K562 (cell line): ENCODE measurements at regions of chr1 and their contacts with region 1.

Region 1: DNA sequence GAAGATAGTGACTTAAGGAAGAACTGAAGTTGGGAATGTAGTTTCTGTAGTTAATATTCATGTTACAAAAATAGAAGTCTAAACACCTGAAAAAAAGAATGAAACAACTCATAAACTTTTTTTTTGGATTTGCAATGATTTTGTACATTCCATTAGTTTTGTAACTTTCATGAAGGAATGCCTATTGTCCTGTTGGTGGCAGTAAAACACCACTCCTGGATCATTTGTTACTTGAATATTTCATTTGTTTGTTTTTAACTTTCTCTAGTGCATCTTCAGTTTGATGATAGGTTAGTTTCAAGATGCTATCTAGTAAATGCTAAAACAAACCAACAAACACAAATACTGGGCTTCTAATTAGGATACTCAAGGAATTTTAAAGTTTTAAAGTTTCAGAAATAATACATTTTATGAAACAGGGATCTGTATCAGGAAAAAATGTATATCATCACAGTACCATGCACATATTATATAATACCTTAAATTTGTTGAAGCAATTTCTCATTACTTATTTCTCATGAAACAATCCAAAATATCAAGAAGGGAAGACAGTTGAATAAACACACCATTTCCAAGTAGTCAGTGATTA is 229.7 kb upstream of the CACYBP start:
- DNase-seq: peak; percentile 28 to 73 (median 38)
- ATAC-seq: peak; percentile 80
- H3K4me3 ChIP-seq: no peak overlapping the region
- H3K27ac ChIP-seq: no peak overlapping the region
- H3K4me1 ChIP-seq: peaks cover 0 to 10% of the 10 kb centered on the region in 2 experiments; a peak in 2 of 5 replicates
- H3K27me3 ChIP-seq: no peaks in the 10 kb centered on the region
- CTCF ChIP-seq: peak; percentile 59 to 93 (median 63); a peak in 4 of 6 replicates
- EP300 ChIP-seq: no peak
- POLR2A ChIP-seq: no peak
- RAD21 ChIP-seq: peak; percentile 93 to 95

Region 2: GRCh38 chr1:174676856-174677255 is 93.2 kb before region 1 on chr1:
- CTCF ChIA-PET with region 1: no interaction called
- POLR2A ChIA-PET with region 1: no interaction called
- in situ Hi-C with region 1: no loop called
- intact Hi-C with region 1: no loop called
- DNase-seq: no peak
- ATAC-seq: no peak
- H3K4me3 ChIP-seq: no peak overlapping the region
- H3K27ac ChIP-seq: no peak overlapping the region
- H3K4me1 ChIP-seq: no peaks in the 10 kb centered on the region; a peak in 1 of 5 replicates
- H3K27me3 ChIP-seq: no peaks in the 10 kb centered on the region
- CTCF ChIP-seq: no peak
- EP300 ChIP-seq: no peak
- POLR2A ChIP-seq: no peak
- RAD21 ChIP-seq: no peak

Region 3: DNA sequence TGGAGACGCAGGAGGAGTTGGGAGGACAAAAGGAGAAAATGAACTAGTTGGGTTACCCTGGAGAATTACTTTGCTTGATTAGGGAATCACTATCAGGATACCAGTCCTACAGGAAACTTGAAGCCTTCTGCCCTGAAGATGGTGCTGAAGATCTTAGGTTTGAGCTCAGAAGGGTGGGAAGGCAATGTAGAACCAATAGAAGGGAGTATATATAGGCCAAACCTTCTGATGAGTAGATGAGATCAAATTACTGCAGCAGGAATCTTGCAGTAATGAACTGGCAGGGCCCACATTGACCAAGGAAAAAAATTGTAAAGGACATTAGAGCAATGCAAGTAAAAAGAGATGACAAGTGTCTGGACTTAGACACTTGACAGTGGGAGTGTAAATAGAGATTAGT is 113.4 kb after region 1 on chr1:
- CTCF ChIA-PET with region 1: no interaction called
- POLR2A ChIA-PET with region 1: no interaction called
- in situ Hi-C with region 1: no loop called
- intact Hi-C with region 1: loop called (anchors 2 kb)
- DNase-seq: peak in 2 of 4 experiments; percentile 32 to 52
- ATAC-seq: peak; percentile 81
- H3K4me3 ChIP-seq: no peak overlapping the region
- H3K27ac ChIP-seq: no peak overlapping the region
- H3K4me1 ChIP-seq: peaks cover 6 to 13% of the 10 kb centered on the region in 2 experiments; a peak in 3 of 5 replicates
- H3K27me3 ChIP-seq: no peaks in the 10 kb centered on the region
- CTCF ChIP-seq: peak; percentile 34 to 66 (median 36); a peak in 3 of 6 replicates
- EP300 ChIP-seq: no peak
- POLR2A ChIP-seq: no peak
- RAD21 ChIP-seq: peak; percentile 63 to 75

Region 4: DNA sequence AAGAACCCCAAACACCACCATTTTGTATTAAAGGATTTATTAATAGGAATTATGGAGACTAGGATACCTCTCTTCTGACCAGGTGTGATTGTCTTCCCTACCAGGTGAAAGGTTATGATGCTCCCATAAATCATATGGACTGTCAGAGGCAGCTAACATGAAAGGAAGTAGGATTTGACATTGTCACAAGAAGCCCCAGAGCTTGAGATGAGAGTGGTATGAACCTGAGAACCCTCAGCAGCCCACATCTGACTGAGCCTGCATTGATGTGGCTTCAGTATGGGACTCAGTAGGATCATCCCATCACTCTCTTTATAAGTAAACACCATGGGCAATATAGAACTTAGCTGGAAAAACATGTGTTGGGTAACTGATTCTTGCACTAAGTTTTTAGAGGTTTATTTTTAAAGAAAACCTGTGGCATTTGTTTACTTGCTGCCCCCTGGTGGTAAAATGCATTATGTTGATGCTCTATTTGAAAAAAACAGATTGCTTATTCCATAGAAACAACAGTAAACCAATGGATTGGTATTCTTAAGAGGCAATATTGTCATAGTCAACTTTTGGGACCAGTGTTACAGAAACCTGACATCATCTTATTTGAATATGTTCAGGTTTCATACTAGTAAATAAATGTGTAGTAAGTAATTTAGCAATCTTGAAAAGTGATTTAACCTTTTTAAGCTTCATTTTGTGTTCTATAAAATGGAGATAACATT is 213.1 kb after region 1 on chr1:
- CTCF ChIA-PET with region 1: interaction called, 59 read pairs
- POLR2A ChIA-PET with region 1: no interaction called
- in situ Hi-C with region 1: no loop called
- intact Hi-C with region 1: loop called (anchors 1 kb)
- DNase-seq: peak; percentile 43 to 74 (median 48)
- ATAC-seq: peak; percentile 43; the same call in 2 of the 3 replicates
- H3K4me3 ChIP-seq: no peak overlapping the region
- H3K27ac ChIP-seq: no peak overlapping the region
- H3K4me1 ChIP-seq: no peaks in the 10 kb centered on the region
- H3K27me3 ChIP-seq: no peaks in the 10 kb centered on the region
- CTCF ChIP-seq: peak; percentile 48 to 82 (median 68); a peak in 4 of 6 replicates
- EP300 ChIP-seq: no peak
- POLR2A ChIP-seq: no peak
- RAD21 ChIP-seq: peak; percentile 75 to 91

Region 5: DNA sequence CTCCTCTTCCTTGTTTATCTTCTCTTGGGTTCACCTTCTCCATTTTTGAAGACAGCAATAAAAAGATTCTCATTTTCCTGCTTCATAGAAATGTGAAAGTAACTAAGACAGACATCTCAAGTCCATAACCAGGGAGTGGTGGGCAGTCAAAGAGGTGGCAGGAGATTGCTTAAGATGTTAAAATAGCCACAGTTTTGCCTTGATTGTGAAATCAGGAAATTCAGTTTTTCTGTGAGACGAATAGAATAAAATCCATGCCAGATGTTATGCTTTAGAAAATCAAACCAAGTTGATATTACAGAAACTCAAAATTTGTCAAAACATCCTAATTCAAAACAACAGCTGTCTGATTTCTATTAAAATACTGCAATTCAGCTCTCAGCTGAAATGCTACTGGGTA is 354.8 kb after region 1 on chr1:
- CTCF ChIA-PET with region 1: interaction called, 5 read pairs
- POLR2A ChIA-PET with region 1: no interaction called
- in situ Hi-C with region 1: loop called (anchors 5 kb)
- intact Hi-C with region 1: loop called (anchors 1 kb)
- DNase-seq: no peak
- ATAC-seq: no peak
- H3K4me3 ChIP-seq: no peak overlapping the region
- H3K27ac ChIP-seq: no peak overlapping the region
- H3K4me1 ChIP-seq: no peaks in the 10 kb centered on the region; a peak in 1 of 5 replicates
- H3K27me3 ChIP-seq: peaks cover 15 to 29% of the 10 kb centered on the region in 2 experiments
- CTCF ChIP-seq: no peak
- EP300 ChIP-seq: no peak
- POLR2A ChIP-seq: no peak
- RAD21 ChIP-seq: no peak

Region 6: DNA sequence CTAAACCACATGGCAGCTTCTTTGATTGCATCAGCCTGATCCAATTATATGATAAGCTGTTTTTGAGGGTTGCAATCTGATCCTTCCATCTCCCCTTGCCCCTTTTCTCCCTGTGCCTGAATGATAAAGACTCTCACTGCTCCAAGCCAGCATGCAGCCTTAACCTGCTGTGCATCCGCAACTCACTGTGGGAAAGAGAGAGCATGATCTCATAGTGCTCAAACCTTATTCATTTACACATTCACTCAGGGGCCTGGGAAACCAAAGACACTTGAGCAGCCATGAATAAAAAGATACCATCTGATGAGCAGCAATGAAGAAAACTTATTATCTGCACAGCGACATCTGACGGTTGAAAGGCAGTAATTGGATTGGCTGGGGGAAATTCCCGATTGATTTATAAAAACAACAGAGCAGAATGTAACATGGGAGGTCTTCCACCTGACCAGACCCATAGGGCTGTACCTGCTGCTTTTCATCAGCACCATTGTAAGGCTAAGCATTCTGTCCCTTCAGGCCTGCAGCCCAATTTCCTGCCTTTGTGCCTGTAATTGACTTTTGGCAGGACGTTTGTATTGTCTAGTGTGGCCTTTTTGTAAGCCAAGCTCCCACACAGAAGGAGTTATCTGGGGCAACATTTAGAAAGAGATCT is 360.1 kb after region 1 on chr1:
- CTCF ChIA-PET with region 1: interaction called, 5 read pairs
- POLR2A ChIA-PET with region 1: interaction called, 4 read pairs
- in situ Hi-C with region 1: loop called (anchors 5 kb)
- intact Hi-C with region 1: loop called (anchors 1 kb)
- DNase-seq: peak in 2 of 4 experiments; percentile 22 to 23
- ATAC-seq: no peak; the same call in 2 of the 3 replicates
- H3K4me3 ChIP-seq: no peak overlapping the region
- H3K27ac ChIP-seq: no peak overlapping the region
- H3K4me1 ChIP-seq: no peaks in the 10 kb centered on the region; a peak in 2 of 5 replicates
- H3K27me3 ChIP-seq: peaks cover 12 to 24% of the 10 kb centered on the region in 2 experiments
- CTCF ChIP-seq: peak in 2 of 3 experiments; percentile 16 to 28; a peak in 2 of 6 replicates
- EP300 ChIP-seq: no peak
- POLR2A ChIP-seq: no peak
- RAD21 ChIP-seq: no peak